ENCODE measurements at regions of chr11 and their contacts with region 1.

Region 1: GRCh38 chr11:7986768-7987559 is at the start of gene EIF3F:
- DNase-seq: peak; percentile 88 to 97
- H3K4me3 ChIP-seq: peak within 1 kb of the TSS; percentile 73 to 99 (median 86)
- H3K27ac ChIP-seq: peak within 1 kb of the TSS; percentile 41; the same call in 1 of the 2 replicates
- H3K4me1 ChIP-seq: peaks cover 0 to 5% (median 3%) of the 10 kb centered on the region in 4 experiments; a peak in 4 of 7 replicates
- H3K27me3 ChIP-seq: no peaks in the 10 kb centered on the region
- CTCF ChIP-seq: peak; percentile 60 to 83 (median 81)
- EP300 ChIP-seq: peak in 1 of 2 experiments; percentile 70; a peak in 1 of 3 replicates
- POLR2A ChIP-seq: peak; percentile 57 to 62
- RAD21 ChIP-seq: peak; percentile 88 to 89
- total RNA-seq, gene EIF3F: 385 and 388 TPM in 2 replicates

Region 2: GRCh38 chr11:7892840-7893254 is 94.1 kb before region 1 on chr11:
- CTCF ChIA-PET with region 1: interaction called, 106 read pairs
- POLR2A ChIA-PET with region 1: interaction called, 24 read pairs
- DNase-seq: no peak
- H3K4me3 ChIP-seq: no peak overlapping the region
- H3K27ac ChIP-seq: no peak overlapping the region
- H3K4me1 ChIP-seq: 0 out of 7 replicates have a peak, but pooled peaks cover 0 to 2% (median 0%) of the 10 kb centered on the region in 4 experiments
- H3K27me3 ChIP-seq: peaks cover 0 to 1% (median 0%) of the 10 kb centered on the region in 4 experiments; a peak in 2 of 7 replicates
- CTCF ChIP-seq: peak in 2 of 3 experiments; percentile 57 to 70; a peak in 3 of 4 replicates
- EP300 ChIP-seq: no peak
- POLR2A ChIP-seq: no peak
- RAD21 ChIP-seq: peak; percentile 75 to 84

Region 3: DNA sequence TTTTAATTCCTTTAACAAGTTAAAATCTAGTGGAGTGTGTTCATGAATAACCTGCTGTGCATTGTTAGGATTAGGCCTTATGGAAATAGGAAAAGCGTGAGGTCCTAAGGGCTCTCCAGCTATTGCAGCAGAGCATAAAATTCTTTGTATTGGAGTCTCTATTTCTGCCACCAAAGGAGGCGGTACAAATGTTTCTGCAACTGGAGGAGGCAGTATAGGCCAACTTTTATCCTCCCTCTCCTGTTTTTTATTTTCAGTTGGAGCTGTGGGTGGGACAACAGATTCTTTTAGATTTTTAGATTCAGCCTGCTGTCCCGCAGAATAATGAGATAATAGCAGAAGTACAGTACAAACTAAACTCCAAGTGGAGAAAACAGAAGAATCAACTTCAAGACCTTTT is 82.0 kb before region 1 on chr11:
- CTCF ChIA-PET with region 1: interaction called, 127 read pairs
- POLR2A ChIA-PET with region 1: interaction called, 58 read pairs
- DNase-seq: no peak
- H3K4me3 ChIP-seq: peak overlapping the region in 2 of 4 experiments; percentile 25 to 30; a peak in 1 of 8 replicates
- H3K27ac ChIP-seq: no peak overlapping the region
- H3K4me1 ChIP-seq: peaks cover 6 to 21% (median 16%) of the 10 kb centered on the region in 4 experiments
- H3K27me3 ChIP-seq: no peaks in the 10 kb centered on the region
- CTCF ChIP-seq: peak in 2 of 3 experiments; percentile 50 to 63; a peak in 3 of 4 replicates
- EP300 ChIP-seq: no peak
- POLR2A ChIP-seq: no peak
- RAD21 ChIP-seq: peak; percentile 69 to 73

Region 4: GRCh38 chr11:7910286-7910788 is 76.6 kb before region 1 on chr11:
- CTCF ChIA-PET with region 1: interaction called, 127 read pairs
- POLR2A ChIA-PET with region 1: interaction called, 58 read pairs
- DNase-seq: no peak
- H3K4me3 ChIP-seq: no peak overlapping the region
- H3K27ac ChIP-seq: no peak overlapping the region
- H3K4me1 ChIP-seq: peaks cover 4 to 15% (median 11%) of the 10 kb centered on the region in 4 experiments; a peak in 6 of 7 replicates
- H3K27me3 ChIP-seq: no peaks in the 10 kb centered on the region
- CTCF ChIP-seq: no peak
- EP300 ChIP-seq: no peak
- POLR2A ChIP-seq: no peak
- RAD21 ChIP-seq: no peak

Region 5: DNA sequence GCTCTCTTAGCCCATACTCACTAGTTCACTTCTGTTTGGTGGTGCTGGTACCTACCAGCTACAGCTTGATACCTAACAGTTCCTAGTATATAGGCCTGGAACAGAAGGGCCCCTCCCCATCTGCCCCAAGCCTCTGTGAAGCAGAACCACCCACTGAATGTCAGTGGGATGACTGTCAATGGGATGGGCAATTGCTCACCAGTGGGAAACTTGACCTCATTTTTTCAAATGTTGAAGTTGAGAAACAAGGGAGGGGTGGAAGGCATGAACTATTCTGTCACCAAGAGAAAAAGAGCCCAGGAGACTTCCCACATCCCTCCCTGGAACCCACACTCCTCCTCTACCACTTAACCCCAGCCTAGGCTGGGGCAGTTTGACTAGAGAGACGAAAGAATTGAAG is 21.6 kb before region 1 on chr11 and contains the start of gene NLRP10:
- CTCF ChIA-PET with region 1: interaction called, 10 read pairs
- POLR2A ChIA-PET with region 1: interaction called, 8 read pairs
- DNase-seq: no peak
- H3K4me3 ChIP-seq: no peak within 1 kb of the TSS
- H3K27ac ChIP-seq: no peak within 1 kb of the TSS
- H3K4me1 ChIP-seq: peaks cover 0 to 6% (median 2%) of the 10 kb centered on the region in 4 experiments; a peak in 2 of 7 replicates
- H3K27me3 ChIP-seq: no peaks in the 10 kb centered on the region
- CTCF ChIP-seq: no peak
- EP300 ChIP-seq: no peak
- POLR2A ChIP-seq: no peak
- RAD21 ChIP-seq: no peak
- total RNA-seq, gene NLRP10: 0.31 and 0.71 TPM in 2 replicates

Region 6: GRCh38 chr11:7999795-8000194 is 12.8 kb after region 1 on chr11:
- CTCF ChIA-PET with region 1: interaction called, 4 read pairs
- POLR2A ChIA-PET with region 1: interaction called, 20 read pairs
- DNase-seq: no peak
- H3K4me3 ChIP-seq: no peak overlapping the region
- H3K27ac ChIP-seq: no peak overlapping the region
- H3K4me1 ChIP-seq: no peaks in the 10 kb centered on the region
- H3K27me3 ChIP-seq: no peaks in the 10 kb centered on the region
- CTCF ChIP-seq: no peak
- EP300 ChIP-seq: no peak
- POLR2A ChIP-seq: no peak
- RAD21 ChIP-seq: no peak

Measured in H1 (cell line).